ENCODE measurements at regions of chr1 and their contacts with region 1.

Region 1: GRCh38 chr1:42846257-42847110 is at the start of gene ZNF691:
- DNase-seq: peak; percentile 71 to 95
- ATAC-seq: peak; percentile 97 to 99 (median 98)
- H3K4me3 ChIP-seq: peak within 1 kb of the TSS; percentile 72
- H3K4me3 Mint-ChIP-seq: peak within 1 kb of the TSS; percentile 92
- H3K27ac ChIP-seq: peak within 1 kb of the TSS; percentile 16
- H3K27ac Mint-ChIP-seq: peak within 1 kb of the TSS; percentile 52 to 91
- H3K4me1 ChIP-seq: peaks cover 14% of the 10 kb centered on the region
- H3K4me1 Mint-ChIP-seq: peaks cover 17 to 32% of the 10 kb centered on the region in 2 donors
- H3K27me3 ChIP-seq: no peaks in the 10 kb centered on the region
- H3K27me3 Mint-ChIP-seq: no peaks in the 10 kb centered on the region
- CTCF ChIP-seq: no peak
- total RNA-seq, gene ZNF691: 2.8 to 5.7 (median 5.2) TPM

Region 2: GRCh38 chr1:42551180-42551579 is 295.3 kb before region 1 on chr1:
- intact Hi-C with region 1: no loop called
- DNase-seq: no peak
- ATAC-seq: no peak
- H3K4me3 ChIP-seq: no peak overlapping the region
- H3K4me3 Mint-ChIP-seq: no peak overlapping the region
- H3K27ac ChIP-seq: no peak overlapping the region
- H3K27ac Mint-ChIP-seq: no peak overlapping the region
- H3K4me1 ChIP-seq: no peaks in the 10 kb centered on the region
- H3K4me1 Mint-ChIP-seq: no peaks in the 10 kb centered on the region
- H3K27me3 ChIP-seq: no peaks in the 10 kb centered on the region
- H3K27me3 Mint-ChIP-seq: no peaks in the 10 kb centered on the region
- CTCF ChIP-seq: no peak

Region 3: GRCh38 chr1:42816585-42817434 is 29.7 kb before region 1 on chr1 and contains the starts of genes ERMAP and SVBP:
- intact Hi-C with region 1: loop called (anchors 1 kb)
- DNase-seq: peak; percentile 92 to 96
- ATAC-seq: peak; percentile 86 to 96 (median 90)
- H3K4me3 ChIP-seq: peak within 1 kb of the TSS; percentile 84
- H3K4me3 Mint-ChIP-seq: peak within 1 kb of the TSS; percentile 80
- H3K27ac ChIP-seq: peak within 1 kb of the TSS; percentile 83
- H3K27ac Mint-ChIP-seq: peak within 1 kb of the TSS; percentile 80 to 84
- H3K4me1 ChIP-seq: peaks cover 10% of the 10 kb centered on the region
- H3K4me1 Mint-ChIP-seq: peaks cover 19 to 31% of the 10 kb centered on the region in 2 donors
- H3K27me3 ChIP-seq: no peaks in the 10 kb centered on the region
- H3K27me3 Mint-ChIP-seq: no peaks in the 10 kb centered on the region
- CTCF ChIP-seq: no peak
- total RNA-seq, gene ERMAP: 7.0 to 7.5 (median 7.5) TPM
- total RNA-seq, gene SVBP: 13.8 to 16.1 (median 15.2) TPM

Region 4: DNA sequence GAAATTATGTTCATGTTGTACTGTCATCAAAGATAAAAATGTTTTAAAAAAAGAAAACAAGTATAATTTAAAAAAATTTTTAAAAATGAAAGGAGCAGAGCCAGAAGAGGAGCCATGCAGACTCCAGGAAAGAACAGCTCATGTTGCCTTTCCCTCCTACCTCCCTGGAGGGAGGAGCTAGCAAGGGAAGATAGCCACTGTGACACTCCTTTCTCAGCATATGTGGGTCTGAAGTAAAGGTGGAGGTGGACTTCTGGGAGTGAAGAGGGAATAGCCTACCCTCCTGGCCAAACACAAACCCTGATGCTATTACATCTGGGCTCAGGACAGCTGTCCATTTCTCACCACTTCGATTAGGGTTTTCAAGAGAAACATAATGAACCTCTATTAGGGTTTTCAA is 58.0 kb after region 1 on chr1:
- intact Hi-C with region 1: no loop called
- DNase-seq: no peak
- ATAC-seq: no peak
- H3K4me3 ChIP-seq: no peak overlapping the region
- H3K4me3 Mint-ChIP-seq: no peak overlapping the region
- H3K27ac ChIP-seq: no peak overlapping the region
- H3K27ac Mint-ChIP-seq: no peak overlapping the region
- H3K4me1 ChIP-seq: no peaks in the 10 kb centered on the region
- H3K4me1 Mint-ChIP-seq: no peaks in the 10 kb centered on the region
- H3K27me3 ChIP-seq: no peaks in the 10 kb centered on the region
- H3K27me3 Mint-ChIP-seq: peaks cover 0 to 7% of the 10 kb centered on the region in 2 donors
- CTCF ChIP-seq: no peak

Measured in natural killer cell (primary cell).